Endothelial cell of umbilical vein (primary cell): ENCODE measurements at regions of chr2 and their contacts with region 1.

Region 1: DNA sequence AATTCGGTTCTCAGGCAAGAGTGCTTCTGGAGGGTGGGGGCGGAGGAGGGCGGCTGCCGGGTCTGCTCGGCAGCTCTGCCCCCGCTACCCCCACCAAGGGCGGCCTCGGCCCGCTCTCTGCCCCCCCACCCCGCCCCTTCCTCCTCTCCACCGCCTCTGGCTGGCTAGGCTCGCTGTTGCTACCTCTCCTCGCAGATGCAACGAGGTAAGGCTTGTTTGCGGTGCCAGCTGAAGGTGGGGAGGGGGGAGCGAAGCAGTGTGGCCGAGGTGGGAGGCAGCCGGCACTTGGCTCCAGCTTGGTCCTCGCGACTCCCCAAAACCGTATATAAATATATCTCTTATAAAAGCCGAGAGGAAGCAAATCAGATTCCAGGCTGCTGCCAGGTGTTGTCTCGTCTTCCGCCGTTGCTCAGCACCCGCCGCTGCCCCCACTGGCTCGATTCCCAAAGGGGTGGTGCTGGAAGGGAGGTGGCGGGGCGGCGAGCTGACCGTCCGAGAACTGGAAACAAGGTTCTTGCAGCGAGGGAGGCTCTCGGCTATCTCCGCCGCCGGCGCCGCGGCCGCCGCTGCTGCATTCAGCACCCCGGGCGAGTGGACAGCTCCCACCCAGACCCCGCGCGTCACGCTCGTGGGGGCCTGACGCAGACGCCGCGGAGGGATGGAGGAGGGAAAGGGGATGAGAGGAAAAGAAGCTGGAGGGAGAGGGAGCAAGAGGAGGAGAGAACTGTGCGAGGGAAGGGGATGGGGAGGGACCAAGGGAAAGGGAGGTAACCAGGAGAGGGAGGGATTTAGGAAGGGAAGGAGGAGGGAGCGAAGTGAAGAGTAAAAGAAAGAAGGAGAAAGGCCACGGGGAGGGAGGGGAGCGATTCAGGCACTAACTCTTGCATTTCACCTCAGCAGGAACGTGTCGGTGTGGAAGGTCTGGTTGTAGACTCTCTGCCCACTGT is at the start of gene MARCHF4:
- DNase-seq: peak; percentile 92
- H3K4me3 ChIP-seq: peak within 1 kb of the TSS; percentile 66 to 80 (median 69)
- H3K27ac ChIP-seq: peak within 1 kb of the TSS; percentile 99
- H3K4me1 ChIP-seq: peaks cover 57% of the 10 kb centered on the region
- H3K27me3 ChIP-seq: no peaks in the 10 kb centered on the region
- CTCF ChIP-seq: no peak
- POLR2A ChIP-seq: no peak
- total RNA-seq, gene MARCHF4: 21.5 and 25.2 TPM in 2 replicates

Region 2: GRCh38 chr2:216215658-216216390 is 156.2 kb before region 1 on chr2:
- CTCF ChIA-PET with region 1: interaction called, 6 read pairs
- POLR2A ChIA-PET with region 1: no interaction called
- dilution Hi-C with region 1: no loop called
- intact Hi-C with region 1: loop called (anchors 1 kb)
- DNase-seq: no peak
- H3K4me3 ChIP-seq: no peak overlapping the region
- H3K27ac ChIP-seq: no peak overlapping the region
- H3K4me1 ChIP-seq: peaks cover 32% of the 10 kb centered on the region
- H3K27me3 ChIP-seq: no peaks in the 10 kb centered on the region
- CTCF ChIP-seq: peak; percentile 20 to 23
- POLR2A ChIP-seq: no peak

Region 3: GRCh38 chr2:216315789-216316603 is 56.0 kb before region 1 on chr2:
- CTCF ChIA-PET with region 1: interaction called, 3 read pairs
- POLR2A ChIA-PET with region 1: no interaction called
- dilution Hi-C with region 1: no loop called
- intact Hi-C with region 1: loop called (anchors 1 kb)
- DNase-seq: peak; percentile 72
- H3K4me3 ChIP-seq: no peak overlapping the region
- H3K27ac ChIP-seq: peak overlapping the region; percentile 92
- H3K4me1 ChIP-seq: peaks cover 23% of the 10 kb centered on the region
- H3K27me3 ChIP-seq: no peaks in the 10 kb centered on the region
- CTCF ChIP-seq: no peak
- POLR2A ChIP-seq: no peak

Region 4: GRCh38 chr2:216391401-216391800 is 19.4 kb after region 1 on chr2:
- CTCF ChIA-PET with region 1: interaction called, 3 read pairs
- POLR2A ChIA-PET with region 1: no interaction called
- dilution Hi-C with region 1: no loop called
- intact Hi-C with region 1: loop called (anchors 1 kb)
- DNase-seq: peak; percentile 42
- H3K4me3 ChIP-seq: no peak overlapping the region
- H3K27ac ChIP-seq: no peak overlapping the region
- H3K4me1 ChIP-seq: peaks cover 6% of the 10 kb centered on the region
- H3K27me3 ChIP-seq: peaks cover 0 to 3% of the 10 kb centered on the region in 2 experiments
- CTCF ChIP-seq: no peak
- POLR2A ChIP-seq: no peak

Region 5: GRCh38 chr2:216412022-216412999 is 40.3 kb after region 1 on chr2 and contains the start of gene SMARCAL1:
- CTCF ChIA-PET with region 1: interaction called, 4 read pairs
- POLR2A ChIA-PET with region 1: interaction called, 3 read pairs
- dilution Hi-C with region 1: no loop called
- intact Hi-C with region 1: loop called (anchors 1 kb)
- DNase-seq: peak; percentile 99
- H3K4me3 ChIP-seq: peak within 1 kb of the TSS; percentile 29 to 64 (median 54)
- H3K27ac ChIP-seq: peak within 1 kb of the TSS; percentile 66
- H3K4me1 ChIP-seq: peaks cover 4% of the 10 kb centered on the region
- H3K27me3 ChIP-seq: no peaks in the 10 kb centered on the region
- CTCF ChIP-seq: no peak
- POLR2A ChIP-seq: peak; percentile 83
- total RNA-seq, gene SMARCAL1: 28.2 and 30.7 TPM in 2 replicates

Region 6: DNA sequence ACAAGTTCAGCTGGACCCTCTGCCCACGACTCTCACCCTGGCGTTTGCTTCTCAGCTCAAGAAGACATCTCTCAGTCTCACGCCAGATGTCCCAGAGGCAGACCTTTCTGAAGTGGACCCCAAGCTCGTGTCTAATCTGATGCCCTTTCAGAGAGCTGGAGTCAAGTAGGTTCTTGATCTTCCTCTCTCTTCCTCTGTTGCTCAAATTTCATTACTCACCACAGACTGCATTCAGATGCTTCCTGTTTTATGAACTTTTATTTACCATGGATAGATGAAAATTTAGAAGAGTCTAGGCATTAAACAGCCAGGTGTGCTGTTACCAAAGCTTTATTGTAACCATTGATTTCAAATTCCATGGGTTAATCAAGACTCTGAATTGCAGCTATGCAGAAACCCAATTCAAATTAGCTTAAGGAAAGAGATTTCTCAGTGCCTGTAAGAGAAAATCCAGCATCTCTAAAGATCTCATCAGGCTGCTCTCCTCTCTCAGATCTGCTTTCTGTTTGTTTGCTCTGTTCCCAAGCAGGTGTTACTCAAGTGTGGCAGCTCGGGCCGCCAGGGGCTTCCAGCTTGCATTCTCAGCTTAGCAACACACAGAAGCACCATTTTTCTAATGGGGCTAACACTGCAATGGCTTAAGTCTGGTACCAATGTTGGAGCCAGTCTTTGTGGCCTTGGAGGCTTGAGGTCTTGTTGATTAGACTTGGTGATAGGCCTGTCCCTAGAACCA is 56.8 kb after region 1 on chr2:
- CTCF ChIA-PET with region 1: no interaction called
- POLR2A ChIA-PET with region 1: no interaction called
- dilution Hi-C with region 1: no loop called
- intact Hi-C with region 1: no loop called
- DNase-seq: no peak
- H3K4me3 ChIP-seq: no peak overlapping the region
- H3K27ac ChIP-seq: no peak overlapping the region
- H3K4me1 ChIP-seq: peaks cover 8% of the 10 kb centered on the region
- H3K27me3 ChIP-seq: no peaks in the 10 kb centered on the region
- CTCF ChIP-seq: no peak
- POLR2A ChIP-seq: no peak

Region 7: DNA sequence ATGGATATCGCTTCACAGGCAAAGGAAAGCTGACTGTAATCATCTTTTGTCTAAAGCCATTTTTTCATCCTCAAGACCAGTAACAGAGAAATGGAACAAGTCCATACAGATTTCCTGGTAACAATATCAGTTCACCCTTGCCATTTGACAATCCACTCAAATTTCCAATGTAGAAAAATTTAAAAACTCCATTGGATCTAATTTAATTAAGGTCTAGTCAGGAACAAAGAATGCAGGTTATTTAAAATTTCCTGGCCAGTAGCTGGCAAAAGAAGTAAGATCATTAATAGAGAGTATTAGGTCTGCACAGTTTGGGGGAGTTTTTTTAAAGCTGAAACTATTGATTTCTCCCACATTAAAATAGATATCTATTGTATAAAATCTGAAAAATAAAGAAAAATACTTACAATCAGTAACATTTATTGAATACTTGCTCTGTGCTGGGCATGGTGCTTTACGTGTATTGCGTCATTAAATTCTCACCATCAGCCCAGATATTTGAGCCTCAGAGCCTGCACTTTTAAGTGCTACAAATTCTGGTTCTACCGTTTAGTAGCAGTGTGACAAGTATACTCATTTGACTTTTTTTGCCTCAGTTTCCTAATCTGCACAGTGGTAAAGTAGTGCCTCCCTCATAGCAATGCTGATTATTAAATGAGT is 82.1 kb after region 1 on chr2:
- CTCF ChIA-PET with region 1: no interaction called
- POLR2A ChIA-PET with region 1: no interaction called
- dilution Hi-C with region 1: no loop called
- intact Hi-C with region 1: no loop called
- DNase-seq: no peak
- H3K4me3 ChIP-seq: no peak overlapping the region
- H3K27ac ChIP-seq: no peak overlapping the region
- H3K4me1 ChIP-seq: no peaks in the 10 kb centered on the region
- H3K27me3 ChIP-seq: no peaks in the 10 kb centered on the region
- CTCF ChIP-seq: no peak
- POLR2A ChIP-seq: no peak